ENCODE measurements at regions of chr1 and their contacts with region 1.

Region 1: DNA sequence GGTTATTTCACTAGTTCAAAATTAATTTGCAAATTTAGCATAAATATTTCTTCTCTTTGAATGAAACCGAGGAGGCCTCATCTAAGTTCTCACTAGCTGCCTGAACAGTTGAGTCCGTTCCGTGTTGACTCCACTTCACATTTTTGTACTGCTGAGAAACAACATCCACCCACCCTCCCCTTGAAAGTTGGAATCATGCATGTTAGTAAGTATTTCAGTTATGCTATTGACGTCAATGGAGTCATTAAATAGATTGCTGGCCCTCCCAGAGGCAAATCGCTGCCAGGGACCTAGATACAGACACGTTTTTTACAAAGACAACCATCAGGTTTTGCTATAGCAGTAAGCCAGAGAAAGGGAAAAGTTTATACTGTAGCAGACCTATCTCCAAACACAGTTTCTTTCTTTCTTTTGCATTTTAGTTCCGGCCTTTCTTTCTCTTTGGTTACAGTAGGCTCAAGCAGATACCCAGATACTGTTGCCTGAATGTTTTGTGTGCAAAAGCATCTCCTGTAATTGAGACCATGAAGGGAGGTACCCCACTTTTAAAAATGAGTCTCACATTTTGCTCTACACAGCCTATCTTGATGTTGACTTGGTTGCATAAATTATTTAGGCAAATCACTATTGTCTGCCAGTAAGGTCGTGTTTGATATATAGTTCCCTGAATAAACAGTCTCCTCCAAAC is 262.6 kb upstream of the SGIP1 start:
- DNase-seq: peak; percentile 86 to 94
- H3K4me3 ChIP-seq: no peak overlapping the region
- H3K27ac ChIP-seq: peak overlapping the region; percentile 85 to 94
- H3K4me1 ChIP-seq: peaks cover 0 to 5% of the 10 kb centered on the region in 2 donors
- H3K27me3 ChIP-seq: no peaks in the 10 kb centered on the region
- CTCF ChIP-seq: no peak
- POLR2A ChIP-seq: peak; percentile 37 to 41

Region 2: GRCh38 chr1:66331657-66332547 is 60.5 kb after region 1 on chr1:
- intact Hi-C with region 1: loop called (anchors 10 kb)
- DNase-seq: peak; percentile 55 to 59
- H3K4me3 ChIP-seq: peak overlapping the region; percentile 28 to 41
- H3K27ac ChIP-seq: peak overlapping the region; percentile 83 to 90
- H3K4me1 ChIP-seq: no peaks in the 10 kb centered on the region
- H3K27me3 ChIP-seq: no peaks in the 10 kb centered on the region
- CTCF ChIP-seq: peak in 2 of 4 experiments; percentile 10 to 41
- POLR2A ChIP-seq: peak; percentile 18 to 49

Region 3: DNA sequence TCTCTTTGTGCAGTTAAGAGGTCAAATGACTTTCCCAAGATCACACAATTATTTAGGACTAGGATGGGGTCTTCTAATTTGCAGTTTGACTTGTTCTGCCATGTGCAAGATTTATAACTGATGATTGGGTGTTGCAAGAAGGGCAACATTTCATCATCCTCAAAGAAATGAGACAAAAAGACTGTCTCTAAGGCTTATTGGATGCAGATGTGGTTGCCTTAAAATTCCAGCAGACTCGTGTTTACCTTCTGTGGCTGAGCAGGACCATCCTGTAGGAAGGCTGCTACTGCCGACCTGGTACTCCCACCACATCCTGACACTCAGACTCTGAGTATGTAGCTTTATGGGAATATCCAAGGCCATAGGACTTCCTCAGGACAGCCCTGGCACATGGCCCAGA is 162.7 kb after region 1 on chr1:
- intact Hi-C with region 1: no loop called
- DNase-seq: no peak
- H3K4me3 ChIP-seq: no peak overlapping the region
- H3K27ac ChIP-seq: no peak overlapping the region
- H3K4me1 ChIP-seq: no peaks in the 10 kb centered on the region
- H3K27me3 ChIP-seq: no peaks in the 10 kb centered on the region
- CTCF ChIP-seq: no peak
- POLR2A ChIP-seq: no peak

Region 4: DNA sequence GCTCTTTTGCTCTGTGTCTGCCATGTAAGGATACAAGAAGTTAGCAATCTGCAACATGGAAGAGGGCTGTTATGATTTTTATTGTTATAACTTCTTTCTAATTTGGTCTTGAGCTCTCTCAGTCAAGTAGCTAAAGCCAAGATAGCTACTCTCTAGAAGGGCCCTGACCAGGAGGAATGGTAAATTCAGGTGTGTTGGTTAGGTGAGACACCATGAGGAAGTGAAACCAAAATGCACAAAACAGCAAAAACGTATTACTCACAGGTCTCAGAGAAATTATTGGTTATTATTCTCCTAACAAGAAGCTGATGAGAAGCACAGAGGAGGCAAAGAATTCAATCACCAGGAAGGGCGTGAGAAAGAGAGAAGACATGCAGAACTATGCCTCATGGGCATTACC is 581.5 kb after region 1 on chr1:
- intact Hi-C with region 1: no loop called
- DNase-seq: no peak
- H3K4me3 ChIP-seq: no peak overlapping the region
- H3K27ac ChIP-seq: no peak overlapping the region
- H3K4me1 ChIP-seq: no peaks in the 10 kb centered on the region
- H3K27me3 ChIP-seq: no peaks in the 10 kb centered on the region
- CTCF ChIP-seq: no peak
- POLR2A ChIP-seq: no peak